ENCODE measurements at regions of chr2 and their contacts with region 1.

Region 1: DNA sequence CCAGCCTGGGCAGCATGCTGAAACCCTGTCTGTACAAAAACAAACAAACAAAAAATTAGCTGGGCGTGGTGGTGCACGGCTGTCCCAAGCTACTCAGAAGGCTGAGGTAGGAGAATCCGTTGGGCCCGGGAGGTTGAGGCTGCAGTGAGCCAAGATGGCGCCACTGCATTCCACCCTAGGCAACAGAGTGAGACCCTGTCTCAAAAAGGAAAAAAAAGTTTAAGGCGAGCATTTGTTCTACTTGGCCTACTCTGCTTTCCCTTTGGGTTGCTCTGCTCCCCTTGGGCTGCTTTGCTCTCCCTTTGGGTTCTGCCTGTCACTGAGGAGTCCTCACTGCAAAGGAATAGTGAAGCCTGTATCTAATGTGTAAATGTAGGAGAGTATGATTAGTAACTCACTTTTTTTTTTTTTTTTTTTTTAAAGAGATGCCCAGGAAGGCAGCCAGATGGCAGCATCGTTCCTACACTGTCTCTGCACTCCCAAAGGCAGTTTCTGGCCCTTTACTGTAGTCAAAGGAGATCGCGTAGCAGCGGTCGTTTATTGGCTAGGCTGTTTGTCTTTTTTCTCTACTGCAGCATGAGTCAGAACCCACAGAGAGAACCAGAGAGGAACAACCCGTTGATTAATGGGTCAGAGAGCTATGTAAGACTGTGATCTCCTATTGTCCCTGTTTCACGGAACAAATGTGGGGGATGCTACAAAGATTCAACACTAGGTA is 118.3 kb upstream of the CWC22 start:
- H3K4me3 ChIP-seq: no peak overlapping the region
- H3K27ac ChIP-seq: no peak overlapping the region; the same call in 1 of the 2 replicates
- H3K4me1 ChIP-seq: peaks cover 7% of the 10 kb centered on the region
- CTCF ChIP-seq: no peak; the same call in none of the 2 replicates

Region 2: DNA sequence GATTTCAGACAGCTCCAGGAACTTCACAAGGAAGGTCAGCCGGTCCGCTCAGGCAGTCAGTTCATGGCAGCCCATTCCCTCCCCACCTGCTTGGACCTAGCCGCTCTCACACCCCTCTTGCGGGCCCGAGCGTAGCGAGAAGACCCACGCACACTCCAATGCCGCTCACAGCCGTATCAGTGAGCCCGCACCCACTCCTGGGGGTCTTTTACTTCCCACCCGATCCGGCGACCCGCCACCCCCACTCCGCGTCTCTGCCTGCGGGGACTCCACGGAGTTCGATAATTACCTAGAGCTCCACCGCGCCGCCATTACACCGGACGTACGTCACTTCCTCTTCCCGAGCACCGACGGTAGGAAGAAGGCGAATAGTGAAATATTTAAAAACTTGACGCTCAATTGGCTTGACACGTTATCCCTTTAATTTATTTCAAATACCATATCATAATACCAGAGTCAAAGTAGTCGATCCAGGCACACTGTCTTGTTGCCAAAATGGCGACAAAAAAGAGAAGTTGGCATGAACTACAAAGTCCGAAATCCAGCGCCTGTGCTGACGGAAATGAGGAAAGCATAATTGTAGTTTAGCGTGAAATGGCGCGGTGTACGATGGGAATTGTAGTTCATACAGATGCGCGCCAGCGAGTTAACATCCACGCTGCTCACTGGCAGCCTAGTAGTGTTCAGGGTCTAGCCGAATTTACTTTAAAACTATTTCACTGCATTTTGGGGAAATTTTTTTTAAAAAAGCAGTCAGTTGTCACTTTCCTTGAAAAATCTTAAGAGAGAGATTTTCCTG is 118.4 kb before region 1 on chr2 and contains the start of gene CWC22:
- CTCF ChIA-PET with region 1: no interaction called
- POLR2A ChIA-PET with region 1: no interaction called
- H3K4me3 ChIP-seq: peak within 1 kb of the TSS; percentile 88
- H3K27ac ChIP-seq: peak within 1 kb of the TSS; percentile 51
- H3K4me1 ChIP-seq: no peaks in the 10 kb centered on the region
- CTCF ChIP-seq: no peak

Region 3: DNA sequence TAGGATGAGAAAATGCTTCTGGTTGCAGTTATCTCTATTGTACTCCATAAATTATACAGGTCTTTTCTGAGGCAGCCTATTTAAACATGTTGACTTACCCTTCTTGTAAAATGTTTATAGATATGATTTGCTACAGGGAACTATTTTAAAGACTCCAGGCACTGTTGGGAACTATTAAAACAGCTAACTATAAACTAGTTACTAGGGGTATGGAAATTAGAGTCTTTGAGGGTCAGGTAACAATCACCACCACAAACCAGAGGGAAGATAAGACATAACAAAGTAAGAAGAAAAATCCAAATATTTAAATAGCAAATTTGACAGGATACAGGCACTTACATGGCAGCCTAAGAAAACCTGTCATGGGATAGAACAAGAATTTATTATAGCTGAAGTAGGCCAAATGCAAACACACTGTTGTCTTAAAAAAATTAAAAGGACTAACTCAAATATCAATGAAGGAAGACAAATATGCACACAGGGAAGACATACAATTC is 132.7 kb after region 1 on chr2:
- CTCF ChIA-PET with region 1: no interaction called
- POLR2A ChIA-PET with region 1: no interaction called
- H3K4me3 ChIP-seq: no peak overlapping the region
- H3K27ac ChIP-seq: peak overlapping the region; percentile 62
- H3K4me1 ChIP-seq: peaks cover 11% of the 10 kb centered on the region
- CTCF ChIP-seq: no peak

Region 4: GRCh38 chr2:181058378-181059269 is 933.2 kb after region 1 on chr2:
- CTCF ChIA-PET with region 1: interaction called, 25 read pairs
- POLR2A ChIA-PET with region 1: no interaction called
- H3K4me3 ChIP-seq: no peak overlapping the region
- H3K27ac ChIP-seq: no peak overlapping the region
- H3K4me1 ChIP-seq: no peaks in the 10 kb centered on the region
- CTCF ChIP-seq: 0 out of 2 replicates have a peak, but pooled peaks have one; percentile 25

Measured in HEK293 (cell line).